CD4-positive, alpha-beta memory T cell (primary cell): ENCODE measurements at regions of chr10 and their contacts with region 1.

Region 1: GRCh38 chr10:43292755-43293676 is 26.2 kb upstream of the RASGEF1A start:
- DNase-seq: peak in 4 of 5 donors; percentile 40 to 54 (median 46)
- H3K4me3 ChIP-seq: peak overlapping the region in 1 of 2 donors; percentile 3
- H3K4me3 Mint-ChIP-seq: peak overlapping the region; percentile 3 to 87 (median 70)
- H3K27ac ChIP-seq: peak overlapping the region; percentile 53
- H3K27ac Mint-ChIP-seq: peak overlapping the region; percentile 86 to 97 (median 94)
- H3K4me1 ChIP-seq: peaks cover 66% of the 10 kb centered on the region
- H3K4me1 Mint-ChIP-seq: peaks cover 42 to 87% (median 66%) of the 10 kb centered on the region in 4 donors
- H3K27me3 ChIP-seq: no peaks in the 10 kb centered on the region
- H3K27me3 Mint-ChIP-seq: no peaks in the 10 kb centered on the region

Region 2: DNA sequence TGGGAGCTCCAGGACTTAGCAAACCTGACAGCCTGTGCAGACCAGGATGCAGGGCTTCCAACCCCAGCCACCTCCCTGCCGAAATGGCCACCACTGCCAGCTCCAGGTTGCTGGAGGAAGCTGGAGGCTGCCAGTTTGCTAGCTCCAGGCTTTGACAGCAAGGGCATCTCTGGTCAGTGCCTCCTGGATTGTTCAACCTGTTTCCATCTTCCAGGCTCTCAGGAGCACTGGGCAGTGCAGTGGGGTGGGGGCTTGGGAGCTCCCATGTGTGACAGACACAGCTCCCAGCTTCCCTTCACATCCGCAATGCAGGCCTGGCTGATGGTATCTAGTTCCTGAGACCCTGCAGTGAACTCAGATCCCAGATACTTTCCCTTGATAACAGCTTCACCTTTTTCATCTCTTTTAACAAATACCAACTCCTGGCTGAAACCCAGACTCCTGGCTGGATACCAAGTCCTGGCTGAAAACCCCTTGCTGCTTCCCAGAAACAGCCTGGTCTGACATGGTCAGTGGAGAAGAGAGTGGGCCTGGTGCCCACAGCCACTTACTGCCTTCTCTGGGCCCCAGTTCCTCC is 236.9 kb before region 1 on chr10:
- CTCF ChIA-PET with region 1: no interaction called
- POLR2A ChIA-PET with region 1: no interaction called
- intact Hi-C with region 1: no loop called
- DNase-seq: no peak
- H3K4me3 ChIP-seq: no peak overlapping the region
- H3K4me3 Mint-ChIP-seq: no peak overlapping the region
- H3K27ac ChIP-seq: no peak overlapping the region
- H3K27ac Mint-ChIP-seq: no peak overlapping the region
- H3K4me1 ChIP-seq: no peaks in the 10 kb centered on the region
- H3K4me1 Mint-ChIP-seq: no peaks in the 10 kb centered on the region
- H3K27me3 ChIP-seq: no peaks in the 10 kb centered on the region
- H3K27me3 Mint-ChIP-seq: peaks cover 8 to 19% of the 10 kb centered on the region in 2 donors

Region 3: DNA sequence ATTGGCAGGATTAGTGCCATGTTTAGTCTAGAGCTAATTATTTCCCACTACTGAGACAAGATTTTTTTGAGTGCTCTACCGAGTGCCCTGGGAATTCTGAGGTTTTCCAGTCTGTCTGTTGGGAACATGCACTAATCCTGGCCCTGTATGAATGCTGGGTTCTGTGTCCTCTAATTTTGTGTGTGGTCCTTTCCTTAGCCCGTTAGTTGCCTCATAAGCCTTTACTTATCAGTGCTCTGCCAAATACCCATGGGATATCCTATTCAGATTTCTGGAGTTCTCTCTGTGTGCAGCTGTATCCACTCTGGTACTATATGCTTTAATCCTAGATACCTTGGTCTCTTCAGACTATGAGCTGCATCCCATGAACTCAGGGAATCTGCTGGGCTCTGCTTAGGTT is 141.6 kb before region 1 on chr10:
- CTCF ChIA-PET with region 1: no interaction called
- POLR2A ChIA-PET with region 1: no interaction called
- intact Hi-C with region 1: no loop called
- DNase-seq: no peak
- H3K4me3 ChIP-seq: no peak overlapping the region
- H3K4me3 Mint-ChIP-seq: peak overlapping the region in 6 of 8 donors; percentile 17 to 64 (median 38)
- H3K27ac ChIP-seq: no peak overlapping the region
- H3K27ac Mint-ChIP-seq: peak overlapping the region in 3 of 7 donors; percentile 3 to 66 (median 31)
- H3K4me1 ChIP-seq: peaks cover 43% of the 10 kb centered on the region
- H3K4me1 Mint-ChIP-seq: peaks cover 43 to 74% (median 59%) of the 10 kb centered on the region in 4 donors
- H3K27me3 ChIP-seq: no peaks in the 10 kb centered on the region
- H3K27me3 Mint-ChIP-seq: no peaks in the 10 kb centered on the region

Region 4: GRCh38 chr10:43265799-43266721 is 27.0 kb before region 1 on chr10:
- CTCF ChIA-PET with region 1: interaction called, 38 read pairs
- POLR2A ChIA-PET with region 1: interaction called, 37 read pairs
- intact Hi-C with region 1: loop called (anchors 1 kb)
- DNase-seq: peak; percentile 60 to 62 (median 61)
- H3K4me3 ChIP-seq: peak overlapping the region in 1 of 2 donors; percentile 54
- H3K4me3 Mint-ChIP-seq: peak overlapping the region; percentile 85 to 93 (median 89)
- H3K27ac ChIP-seq: peak overlapping the region; percentile 15
- H3K27ac Mint-ChIP-seq: peak overlapping the region; percentile 53 to 91 (median 72)
- H3K4me1 ChIP-seq: peaks cover 10% of the 10 kb centered on the region
- H3K4me1 Mint-ChIP-seq: peaks cover 6 to 24% (median 15%) of the 10 kb centered on the region in 4 donors
- H3K27me3 ChIP-seq: peaks cover 17% of the 10 kb centered on the region
- H3K27me3 Mint-ChIP-seq: peaks cover 5 to 9% of the 10 kb centered on the region in 2 donors

Region 5: DNA sequence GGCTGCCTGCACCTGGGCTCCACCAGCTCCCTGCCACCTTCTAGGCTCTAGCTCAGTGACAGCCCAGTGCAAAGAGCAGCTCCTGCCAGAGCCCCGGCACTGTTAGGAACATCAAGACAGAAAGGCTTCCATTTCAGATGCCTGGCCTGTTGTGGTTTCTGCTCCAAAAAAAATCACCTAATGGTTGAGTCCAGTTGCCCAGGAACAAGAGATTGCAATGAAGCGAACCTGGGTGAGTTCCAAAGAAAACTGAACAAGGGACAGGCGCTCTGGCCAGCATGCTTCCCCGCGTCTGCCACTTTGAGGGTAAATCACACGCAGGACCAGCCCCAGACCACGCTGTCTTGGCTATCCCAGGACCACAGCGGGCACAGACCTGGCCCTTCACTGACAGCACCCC is 20.9 kb after region 1 on chr10:
- CTCF ChIA-PET with region 1: interaction called, 12 read pairs
- POLR2A ChIA-PET with region 1: interaction called, 19 read pairs
- intact Hi-C with region 1: no loop called
- DNase-seq: no peak
- H3K4me3 ChIP-seq: no peak overlapping the region
- H3K4me3 Mint-ChIP-seq: peak overlapping the region in 1 of 8 donors; percentile 31
- H3K27ac ChIP-seq: no peak overlapping the region
- H3K27ac Mint-ChIP-seq: peak overlapping the region in 1 of 7 donors; percentile 8
- H3K4me1 ChIP-seq: peaks cover 20% of the 10 kb centered on the region
- H3K4me1 Mint-ChIP-seq: peaks cover 15 to 29% (median 22%) of the 10 kb centered on the region in 4 donors
- H3K27me3 ChIP-seq: no peaks in the 10 kb centered on the region
- H3K27me3 Mint-ChIP-seq: no peaks in the 10 kb centered on the region

Region 6: DNA sequence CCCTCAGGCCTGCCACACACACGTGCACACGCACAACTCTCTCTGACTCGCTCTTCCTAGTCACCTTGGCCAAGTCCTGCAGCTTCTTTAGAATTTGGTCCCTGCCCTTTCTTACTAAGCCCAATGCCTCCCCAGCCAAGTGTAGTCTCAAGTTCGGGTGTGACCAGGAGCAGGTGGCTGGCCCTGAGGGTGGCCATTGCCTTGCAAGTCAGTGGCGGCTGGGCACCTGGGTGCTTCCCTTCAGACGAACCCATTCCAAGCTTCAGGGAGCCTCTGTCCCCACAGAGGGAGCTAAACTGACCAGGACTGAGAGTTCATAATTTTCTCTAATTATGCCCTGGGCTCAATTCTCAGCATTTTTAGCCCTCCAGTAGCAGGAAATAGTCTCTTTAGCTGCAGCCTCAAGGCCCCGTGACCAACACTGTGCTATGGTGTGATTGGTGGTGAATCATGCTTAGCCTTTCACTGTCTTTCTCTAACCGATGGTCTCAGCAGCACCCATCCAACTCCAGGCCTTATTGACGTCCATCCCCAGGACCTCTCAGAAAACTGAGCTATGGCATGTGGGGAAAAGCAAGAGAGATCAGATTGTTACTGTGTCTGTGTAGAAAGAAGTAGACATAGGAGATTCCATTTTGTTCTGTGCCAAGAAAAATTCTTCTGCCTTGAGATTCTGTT is 43.8 kb after region 1 on chr10:
- CTCF ChIA-PET with region 1: interaction called, 24 read pairs
- POLR2A ChIA-PET with region 1: interaction called, 47 read pairs
- intact Hi-C with region 1: loop called (anchors 1 kb)
- DNase-seq: no peak
- H3K4me3 ChIP-seq: no peak overlapping the region
- H3K4me3 Mint-ChIP-seq: no peak overlapping the region
- H3K27ac ChIP-seq: no peak overlapping the region
- H3K27ac Mint-ChIP-seq: peak overlapping the region in 2 of 7 donors; percentile 17 to 72
- H3K4me1 ChIP-seq: peaks cover 25% of the 10 kb centered on the region
- H3K4me1 Mint-ChIP-seq: peaks cover 26 to 56% (median 30%) of the 10 kb centered on the region in 4 donors
- H3K27me3 ChIP-seq: no peaks in the 10 kb centered on the region
- H3K27me3 Mint-ChIP-seq: peaks cover 3% of the 10 kb centered on the region in 2 donors

Region 7: GRCh38 chr10:43361986-43362839 is 69.2 kb after region 1 on chr10:
- CTCF ChIA-PET with region 1: interaction called, 6 read pairs
- POLR2A ChIA-PET with region 1: interaction called, 12 read pairs
- intact Hi-C with region 1: no loop called
- DNase-seq: peak; percentile 96 to 98 (median 98)
- H3K4me3 ChIP-seq: peak overlapping the region; percentile 82 to 97
- H3K4me3 Mint-ChIP-seq: peak overlapping the region; percentile 95 to 100 (median 98)
- H3K27ac ChIP-seq: peak overlapping the region; percentile 92
- H3K27ac Mint-ChIP-seq: peak overlapping the region; percentile 97 to 99 (median 98)
- H3K4me1 ChIP-seq: peaks cover 19% of the 10 kb centered on the region
- H3K4me1 Mint-ChIP-seq: peaks cover 21 to 34% (median 27%) of the 10 kb centered on the region in 4 donors
- H3K27me3 ChIP-seq: no peaks in the 10 kb centered on the region
- H3K27me3 Mint-ChIP-seq: no peaks in the 10 kb centered on the region

Region 8: DNA sequence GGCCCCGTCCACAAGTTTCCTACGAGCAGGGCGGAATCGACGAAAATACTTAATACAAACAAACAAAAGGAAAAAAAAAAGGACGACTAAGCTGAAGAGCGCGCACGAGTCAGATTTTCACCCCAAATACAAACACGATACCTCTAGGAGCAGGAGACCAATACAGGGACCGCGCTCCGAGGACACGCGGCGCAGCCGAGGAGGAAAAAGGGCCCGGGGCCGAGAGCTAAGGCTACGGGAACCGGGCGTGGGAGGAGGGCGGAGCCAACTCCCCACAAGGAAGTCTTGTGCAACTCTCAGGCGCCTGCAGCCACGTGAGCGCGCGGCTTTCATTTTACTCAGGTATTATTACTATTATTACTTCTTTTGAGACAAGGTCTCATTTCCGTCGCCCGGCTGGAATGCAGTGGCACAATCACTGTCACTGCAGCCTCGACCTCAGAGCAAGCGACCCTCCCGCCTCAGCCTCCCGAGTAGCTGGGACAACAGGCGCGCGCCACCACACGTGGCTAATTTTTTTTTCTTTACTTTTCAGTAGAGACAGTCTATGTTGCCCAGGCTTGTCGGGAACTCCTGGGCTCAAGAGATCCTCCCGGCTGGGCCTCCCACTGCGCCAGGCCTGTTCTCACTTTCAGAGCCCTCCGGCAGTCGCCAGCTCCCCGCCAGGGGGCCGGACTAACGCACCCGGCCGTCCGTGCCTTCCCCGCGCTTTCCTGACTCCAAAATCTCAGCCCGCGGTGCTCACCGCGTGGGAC is 114.7 kb after region 1 on chr10:
- CTCF ChIA-PET with region 1: interaction called, 3 read pairs
- POLR2A ChIA-PET with region 1: interaction called, 4 read pairs
- intact Hi-C with region 1: loop called (anchors 5 kb)
- DNase-seq: peak; percentile 81 to 89 (median 84)
- H3K4me3 ChIP-seq: peak overlapping the region; percentile 83 to 85
- H3K4me3 Mint-ChIP-seq: peak overlapping the region; percentile 94 to 100 (median 98)
- H3K27ac ChIP-seq: peak overlapping the region; percentile 100
- H3K27ac Mint-ChIP-seq: peak overlapping the region; percentile 93 to 100 (median 99)
- H3K4me1 ChIP-seq: peaks cover 39% of the 10 kb centered on the region
- H3K4me1 Mint-ChIP-seq: peaks cover 18 to 53% (median 27%) of the 10 kb centered on the region in 4 donors
- H3K27me3 ChIP-seq: no peaks in the 10 kb centered on the region
- H3K27me3 Mint-ChIP-seq: no peaks in the 10 kb centered on the region

Region 9: GRCh38 chr10:43461950-43462349 is 168.9 kb after region 1 on chr10:
- CTCF ChIA-PET with region 1: interaction called, 29 read pairs
- POLR2A ChIA-PET with region 1: interaction called, 3 read pairs
- intact Hi-C with region 1: loop called (anchors 1 kb)
- DNase-seq: peak; percentile 58 to 75 (median 70)
- H3K4me3 ChIP-seq: no peak overlapping the region
- H3K4me3 Mint-ChIP-seq: peak overlapping the region in 1 of 8 donors; percentile 54
- H3K27ac ChIP-seq: no peak overlapping the region
- H3K27ac Mint-ChIP-seq: peak overlapping the region in 4 of 7 donors; percentile 20 to 71 (median 42)
- H3K4me1 ChIP-seq: peaks cover 2% of the 10 kb centered on the region
- H3K4me1 Mint-ChIP-seq: peaks cover 14 to 21% (median 16%) of the 10 kb centered on the region in 4 donors
- H3K27me3 ChIP-seq: no peaks in the 10 kb centered on the region
- H3K27me3 Mint-ChIP-seq: no peaks in the 10 kb centered on the region